Heart right ventricle (tissue), 16 donors: ENCODE measurements at regions of chr6 and their contacts with region 1.

Region 1: DNA sequence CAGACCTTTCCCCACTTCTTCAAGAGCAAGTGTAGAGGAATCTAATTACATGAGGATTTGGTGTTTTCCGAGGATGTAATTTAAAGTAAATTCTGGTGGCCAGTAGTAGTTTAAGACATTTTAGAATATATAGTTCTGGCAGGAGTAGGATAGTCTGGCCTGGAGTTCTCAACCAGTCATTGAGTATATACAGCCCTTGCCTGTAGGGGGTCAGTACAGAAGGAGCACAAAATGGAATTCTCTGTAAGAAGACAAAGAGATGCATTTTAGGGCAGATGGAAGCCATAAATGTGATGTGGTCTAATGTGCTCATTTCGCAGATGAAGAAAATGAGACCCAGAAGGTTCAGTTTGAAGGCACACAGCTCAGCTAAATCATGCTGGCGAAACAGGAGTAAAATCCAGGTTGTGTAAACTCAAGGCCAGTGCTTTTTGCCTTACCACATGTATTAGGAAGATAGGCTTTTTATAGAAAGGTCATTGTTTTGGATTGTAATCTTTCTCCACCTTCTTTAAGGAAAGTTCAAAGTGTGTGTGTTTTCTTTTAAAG is 29.5 kb downstream of the QKI start:
- DNase-seq: no peak
- ATAC-seq: peak in 2 of 8 donors; percentile 10 to 28
- H3K4me3 ChIP-seq: no peak overlapping the region
- H3K27ac ChIP-seq: peak overlapping the region in 1 of 10 donors; percentile 6
- H3K4me1 ChIP-seq: peaks cover 14 to 100% (median 98%) of the 10 kb centered on the region in 9 donors
- H3K27me3 ChIP-seq: no peaks in the 10 kb centered on the region
- CTCF ChIP-seq: peak in 1 of 9 donors; percentile 7

Region 2: GRCh38 chr6:163162874-163163213 is 281.2 kb before region 1 on chr6:
- intact Hi-C with region 1: no loop called
- DNase-seq: no peak
- ATAC-seq: no peak
- H3K4me3 ChIP-seq: no peak overlapping the region
- H3K27ac ChIP-seq: no peak overlapping the region
- H3K4me1 ChIP-seq: no peaks in the 10 kb centered on the region
- H3K27me3 ChIP-seq: no peaks in the 10 kb centered on the region
- CTCF ChIP-seq: no peak

Region 3: GRCh38 chr6:163533443-163533842 is 89.4 kb after region 1 on chr6:
- intact Hi-C with region 1: loop called in 1 of 10 experiments (anchors 10 kb)
- DNase-seq: no peak
- ATAC-seq: peak in 3 of 8 donors; percentile 47 to 86 (median 63)
- H3K4me3 ChIP-seq: no peak overlapping the region
- H3K27ac ChIP-seq: peak overlapping the region in 6 of 10 donors; percentile 5 to 39 (median 24)
- H3K4me1 ChIP-seq: peaks cover 8 to 98% (median 88%) of the 10 kb centered on the region in 9 donors
- H3K27me3 ChIP-seq: no peaks in the 10 kb centered on the region
- CTCF ChIP-seq: no peak